ENCODE measurements at regions of chr15 and their contacts with region 1.

Region 1: DNA sequence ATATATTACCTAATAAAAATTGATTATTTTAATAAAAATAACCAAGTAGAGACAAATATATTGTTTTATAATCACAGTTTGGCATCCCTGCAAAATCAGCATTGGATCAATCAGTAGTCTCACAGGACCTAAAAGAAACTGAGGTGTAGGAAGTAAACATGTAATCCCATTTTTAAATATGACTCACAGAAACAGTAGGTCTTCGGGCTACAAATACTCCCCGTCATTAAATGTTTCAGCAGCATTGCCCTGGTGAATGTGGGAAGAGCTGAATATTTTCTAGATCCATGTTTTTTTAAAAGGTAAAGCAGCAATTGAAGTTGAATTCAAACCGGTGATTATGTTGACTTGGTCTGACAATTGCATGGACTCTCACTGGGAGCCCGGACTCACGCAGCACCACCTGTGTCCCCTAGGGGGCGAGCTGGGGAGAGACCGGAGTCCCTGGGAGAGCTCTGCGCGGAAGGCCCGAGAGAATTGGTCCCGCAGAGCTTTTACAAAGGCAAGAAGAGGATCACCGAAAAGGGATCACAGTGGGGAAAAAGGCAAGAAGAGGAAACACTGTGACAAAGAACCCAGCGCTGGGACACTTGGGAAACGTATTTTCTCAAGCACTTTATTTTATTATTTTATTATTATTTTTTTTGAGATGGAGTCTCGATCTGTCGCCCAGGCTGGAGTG is 17.2 kb upstream of the USP3 start:
- DNase-seq: peak; percentile 67
- ATAC-seq: peak; percentile 100
- H3K4me3 ChIP-seq: peak overlapping the region in 1 of 2 experiments; percentile 24; a peak in 1 of 4 replicates
- H3K27ac ChIP-seq: no peak overlapping the region
- H3K4me1 ChIP-seq: peaks cover under 1 to 7% of the 10 kb centered on the region in 2 experiments; a peak in 3 of 4 replicates
- H3K27me3 ChIP-seq: no peaks in the 10 kb centered on the region
- CTCF ChIP-seq: peak; percentile 49 to 98 (median 93); a peak in 5 of 6 replicates
- POLR2A ChIP-seq: no peak
- RAD21 ChIP-seq: peak; percentile 70

Region 2: GRCh38 chr15:63474810-63475319 is 12.4 kb before region 1 on chr15:
- CTCF ChIA-PET with region 1: interaction called, 11 read pairs
- POLR2A ChIA-PET with region 1: no interaction called
- RAD21 ChIA-PET with region 1: no interaction called
- intact Hi-C with region 1: no loop called
- DNase-seq: no peak
- ATAC-seq: no peak
- H3K4me3 ChIP-seq: no peak overlapping the region
- H3K27ac ChIP-seq: no peak overlapping the region
- H3K4me1 ChIP-seq: peaks cover 0 to 26% of the 10 kb centered on the region in 2 experiments; a peak in 2 of 4 replicates
- H3K27me3 ChIP-seq: no peaks in the 10 kb centered on the region
- CTCF ChIP-seq: no peak
- POLR2A ChIP-seq: no peak
- RAD21 ChIP-seq: no peak

Region 3: DNA sequence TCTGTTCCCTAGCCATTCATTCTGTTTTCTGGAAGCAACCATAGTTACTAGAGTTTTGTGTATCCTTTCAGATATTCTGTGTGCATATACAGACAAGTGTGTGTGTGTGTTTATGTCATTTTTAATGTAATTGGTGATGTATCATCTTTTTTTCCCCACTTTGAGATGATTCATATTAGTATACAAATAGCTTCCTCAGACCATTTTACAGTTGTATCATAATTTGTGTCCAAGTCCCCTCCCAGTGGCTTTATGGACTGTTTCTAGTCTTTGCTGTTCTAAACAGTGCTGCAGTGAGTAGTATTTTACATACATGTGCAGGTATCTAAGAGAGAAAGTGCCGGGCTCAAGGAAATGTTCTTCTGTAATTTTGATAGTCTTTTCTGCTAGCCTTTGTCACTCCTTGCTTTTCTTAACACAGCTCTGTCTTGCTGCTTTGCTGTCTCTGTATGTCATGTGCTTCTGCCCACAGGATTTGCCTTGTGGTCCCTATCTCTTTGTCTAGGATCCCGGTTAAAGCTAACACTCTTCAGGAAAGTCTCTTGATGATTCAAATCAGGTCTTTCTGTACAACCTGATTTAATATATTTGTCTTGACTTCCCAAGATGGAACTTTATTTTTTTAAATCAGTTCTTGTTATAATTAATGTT is 78.4 kb after region 1 on chr15:
- CTCF ChIA-PET with region 1: no interaction called
- POLR2A ChIA-PET with region 1: no interaction called
- RAD21 ChIA-PET with region 1: no interaction called
- intact Hi-C with region 1: no loop called
- DNase-seq: no peak
- ATAC-seq: no peak
- H3K4me3 ChIP-seq: no peak overlapping the region
- H3K27ac ChIP-seq: no peak overlapping the region
- H3K4me1 ChIP-seq: no peaks in the 10 kb centered on the region
- H3K27me3 ChIP-seq: no peaks in the 10 kb centered on the region
- CTCF ChIP-seq: no peak
- POLR2A ChIP-seq: no peak
- RAD21 ChIP-seq: no peak

Region 4: DNA sequence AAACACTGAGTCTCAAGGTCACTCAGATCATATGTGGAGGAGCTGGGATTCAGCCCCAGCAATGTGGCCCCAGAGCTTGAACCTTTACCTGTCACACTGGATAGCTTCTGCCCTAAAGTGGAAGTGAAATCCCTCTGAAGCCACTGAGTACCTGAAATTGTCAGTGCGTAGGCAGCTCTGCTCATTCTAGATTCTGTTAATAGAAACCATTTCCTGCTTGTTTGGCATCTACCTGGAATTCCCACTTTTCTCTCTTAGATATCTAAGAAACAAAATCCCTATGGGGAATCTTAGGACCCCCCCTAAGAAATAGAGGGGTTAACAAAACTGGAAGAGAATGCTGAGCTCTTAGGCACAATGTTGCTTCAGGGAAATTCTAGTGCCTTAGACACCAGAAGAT is 139.7 kb after region 1 on chr15:
- CTCF ChIA-PET with region 1: no interaction called
- POLR2A ChIA-PET with region 1: no interaction called
- RAD21 ChIA-PET with region 1: no interaction called
- intact Hi-C with region 1: no loop called
- DNase-seq: no peak
- ATAC-seq: no peak
- H3K4me3 ChIP-seq: no peak overlapping the region
- H3K27ac ChIP-seq: no peak overlapping the region
- H3K4me1 ChIP-seq: no peaks in the 10 kb centered on the region
- H3K27me3 ChIP-seq: no peaks in the 10 kb centered on the region
- CTCF ChIP-seq: no peak
- POLR2A ChIP-seq: no peak
- RAD21 ChIP-seq: no peak